ENCODE measurements at regions of chr20 and their contacts with region 1.

Region 1: GRCh38 chr20:3995067-3995748 is 20.1 kb downstream of the RNF24 start:
- DNase-seq: no peak
- H3K4me3 Mint-ChIP-seq: peak overlapping the region; percentile 55
- H3K27ac Mint-ChIP-seq: peak overlapping the region; percentile 90
- H3K4me1 Mint-ChIP-seq: peaks cover 57% of the 10 kb centered on the region
- H3K27me3 Mint-ChIP-seq: no peaks in the 10 kb centered on the region

Region 2: GRCh38 chr20:3521852-3522740 is 473.1 kb before region 1 on chr20:
- intact Hi-C with region 1: no loop called
- DNase-seq: no peak
- H3K4me3 Mint-ChIP-seq: no peak overlapping the region
- H3K27ac Mint-ChIP-seq: no peak overlapping the region
- H3K4me1 Mint-ChIP-seq: no peaks in the 10 kb centered on the region
- H3K27me3 Mint-ChIP-seq: no peaks in the 10 kb centered on the region

Region 3: GRCh38 chr20:3919352-3919751 is 75.9 kb before region 1 on chr20:
- intact Hi-C with region 1: no loop called
- DNase-seq: no peak
- H3K4me3 Mint-ChIP-seq: no peak overlapping the region
- H3K27ac Mint-ChIP-seq: no peak overlapping the region
- H3K4me1 Mint-ChIP-seq: peaks cover 49% of the 10 kb centered on the region
- H3K27me3 Mint-ChIP-seq: no peaks in the 10 kb centered on the region

Region 4: DNA sequence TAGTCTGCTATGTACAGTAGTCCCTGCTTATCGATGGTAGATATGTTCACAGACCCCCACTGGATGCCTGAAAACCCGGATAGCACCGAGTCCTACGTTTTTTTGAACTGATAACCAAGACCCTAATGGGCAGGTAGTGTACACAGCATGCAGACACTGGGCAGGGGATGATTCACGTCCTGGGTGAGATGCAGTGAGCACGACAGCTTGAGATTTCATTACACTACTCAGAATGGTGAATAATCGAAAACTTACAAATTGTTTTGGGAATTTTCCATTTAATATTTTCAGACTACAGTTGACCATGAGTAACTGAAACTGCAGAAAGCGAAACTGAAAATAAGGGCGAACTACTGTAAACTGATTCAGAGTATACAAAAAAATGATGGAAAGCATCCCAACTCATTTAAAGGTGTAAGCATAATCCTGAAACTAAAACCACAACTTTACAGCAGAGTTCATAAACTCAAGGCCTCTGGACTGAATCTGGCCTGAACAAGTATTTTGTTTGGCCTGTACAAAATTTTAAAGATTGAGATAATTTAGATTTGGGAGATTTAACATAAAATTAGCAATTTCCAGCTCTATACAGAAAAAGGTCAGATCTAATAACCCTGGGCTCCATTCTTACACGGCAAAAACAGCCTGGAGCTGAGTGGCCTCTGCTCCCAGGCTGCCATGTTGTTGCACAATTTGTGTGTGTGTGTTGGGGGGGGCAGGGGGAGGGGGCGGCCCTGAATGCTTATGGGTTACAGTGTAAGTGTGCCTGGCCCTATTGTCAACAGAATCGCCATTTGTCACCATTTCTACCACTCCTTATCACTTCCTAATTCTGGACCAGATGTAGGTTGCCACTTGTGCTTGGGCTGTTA is 14.7 kb before region 1 on chr20:
- intact Hi-C with region 1: loop called (anchors 1 kb)
- DNase-seq: no peak
- H3K4me3 Mint-ChIP-seq: peak overlapping the region; percentile 78
- H3K27ac Mint-ChIP-seq: peak overlapping the region; percentile 91
- H3K4me1 Mint-ChIP-seq: peaks cover 22% of the 10 kb centered on the region
- H3K27me3 Mint-ChIP-seq: no peaks in the 10 kb centered on the region

Region 5: GRCh38 chr20:4014031-4014474 is 18.8 kb after region 1 on chr20:
- intact Hi-C with region 1: loop called (anchors 1 kb)
- DNase-seq: no peak
- H3K4me3 Mint-ChIP-seq: peak overlapping the region; percentile 87
- H3K27ac Mint-ChIP-seq: peak overlapping the region; percentile 78
- H3K4me1 Mint-ChIP-seq: peaks cover 57% of the 10 kb centered on the region
- H3K27me3 Mint-ChIP-seq: peaks cover 4% of the 10 kb centered on the region

Region 6: DNA sequence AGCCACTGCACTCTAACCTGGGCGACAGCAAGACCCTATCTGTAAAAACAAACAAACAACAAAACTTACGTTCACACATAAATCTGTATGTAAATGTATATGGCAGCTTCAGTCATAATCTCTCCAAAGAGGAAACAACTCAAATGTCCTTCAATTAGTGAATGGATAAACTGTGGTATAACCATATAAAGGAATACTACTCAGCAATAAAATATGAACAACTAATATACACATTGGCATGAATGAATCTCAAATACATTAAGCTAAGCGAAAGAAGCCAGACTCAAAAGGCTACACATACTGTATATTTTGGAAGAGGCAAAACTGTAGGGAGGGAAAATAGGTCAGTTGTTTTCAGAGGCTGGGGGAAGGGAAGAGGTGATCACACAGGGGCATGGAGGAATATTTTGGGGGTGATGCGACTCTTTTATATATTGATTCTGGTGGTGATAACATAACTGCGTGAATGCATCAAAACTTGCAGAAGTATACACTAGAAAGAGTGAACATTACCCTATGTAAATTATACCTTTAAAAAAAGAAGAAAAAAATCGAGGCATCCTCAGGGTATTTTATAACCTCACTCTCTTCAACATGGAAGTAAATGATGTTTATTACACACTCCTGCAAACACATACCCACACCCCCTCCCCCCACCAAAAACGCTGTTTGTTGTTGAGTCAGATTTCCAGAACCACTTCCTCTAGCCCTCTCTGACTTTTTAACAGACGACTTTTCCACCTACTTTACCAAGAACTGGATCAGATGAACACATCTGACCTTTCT is 135.4 kb after region 1 on chr20:
- intact Hi-C with region 1: loop called (anchors 2 kb)
- DNase-seq: peak; percentile 65
- H3K4me3 Mint-ChIP-seq: peak overlapping the region; percentile 60
- H3K27ac Mint-ChIP-seq: peak overlapping the region; percentile 91
- H3K4me1 Mint-ChIP-seq: peaks cover 57% of the 10 kb centered on the region
- H3K27me3 Mint-ChIP-seq: peaks cover 4% of the 10 kb centered on the region

Region 7: GRCh38 chr20:4519530-4519929 is 524.3 kb after region 1 on chr20:
- intact Hi-C with region 1: no loop called
- DNase-seq: peak; percentile 3
- H3K4me3 Mint-ChIP-seq: no peak overlapping the region
- H3K27ac Mint-ChIP-seq: no peak overlapping the region
- H3K4me1 Mint-ChIP-seq: no peaks in the 10 kb centered on the region
- H3K27me3 Mint-ChIP-seq: peaks cover 8% of the 10 kb centered on the region

Measured in activated T-helper 1 cell treated with anti-CD3 and anti-CD28 coated beads, Interleukin-12 subunit alpha, Interleukin-12 subunit beta, Interleukin-2, Interleukin-4 antibody, amounts not matched to agents 30 ng/mL and 10 ng/mL and 1 ng/mL, durations not matched to agents 14 hours and 24 hours and 36 hours (primary cell).